Cardiac septum (tissue), 1 donor: ENCODE measurements at regions of chr10 and their contacts with region 1.

Region 1: DNA sequence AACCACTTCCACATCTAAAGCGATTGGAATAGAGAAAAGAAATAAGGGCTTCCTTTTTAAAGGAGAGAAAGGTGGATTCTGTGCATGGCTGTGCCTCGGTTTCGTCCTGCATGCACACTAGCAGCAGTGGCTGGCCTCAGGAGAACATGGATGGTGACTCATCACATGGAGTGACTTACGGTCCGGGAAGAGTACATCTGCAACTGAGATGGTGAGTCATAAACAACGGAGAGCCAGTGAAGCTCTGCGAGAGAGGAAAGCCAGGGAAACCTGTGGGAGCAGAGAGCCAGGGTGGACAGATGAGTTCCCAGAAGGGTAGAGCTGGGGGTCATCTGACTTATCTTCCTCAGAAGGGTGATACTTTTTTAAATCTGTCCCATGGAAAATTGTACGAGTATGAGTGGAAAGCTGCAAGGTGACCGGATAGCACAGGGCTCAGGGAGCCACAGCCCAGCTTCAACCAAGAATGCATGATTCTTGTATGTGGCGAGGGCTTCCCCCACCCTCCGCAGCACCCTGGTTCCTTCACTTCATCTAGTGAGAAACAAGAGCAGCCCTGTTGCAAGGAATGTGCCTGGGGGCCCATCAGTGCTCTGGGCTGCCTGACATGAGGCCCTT is 259.1 kb downstream of the KLF6 start:
- DNase-seq: no peak

Region 2: DNA sequence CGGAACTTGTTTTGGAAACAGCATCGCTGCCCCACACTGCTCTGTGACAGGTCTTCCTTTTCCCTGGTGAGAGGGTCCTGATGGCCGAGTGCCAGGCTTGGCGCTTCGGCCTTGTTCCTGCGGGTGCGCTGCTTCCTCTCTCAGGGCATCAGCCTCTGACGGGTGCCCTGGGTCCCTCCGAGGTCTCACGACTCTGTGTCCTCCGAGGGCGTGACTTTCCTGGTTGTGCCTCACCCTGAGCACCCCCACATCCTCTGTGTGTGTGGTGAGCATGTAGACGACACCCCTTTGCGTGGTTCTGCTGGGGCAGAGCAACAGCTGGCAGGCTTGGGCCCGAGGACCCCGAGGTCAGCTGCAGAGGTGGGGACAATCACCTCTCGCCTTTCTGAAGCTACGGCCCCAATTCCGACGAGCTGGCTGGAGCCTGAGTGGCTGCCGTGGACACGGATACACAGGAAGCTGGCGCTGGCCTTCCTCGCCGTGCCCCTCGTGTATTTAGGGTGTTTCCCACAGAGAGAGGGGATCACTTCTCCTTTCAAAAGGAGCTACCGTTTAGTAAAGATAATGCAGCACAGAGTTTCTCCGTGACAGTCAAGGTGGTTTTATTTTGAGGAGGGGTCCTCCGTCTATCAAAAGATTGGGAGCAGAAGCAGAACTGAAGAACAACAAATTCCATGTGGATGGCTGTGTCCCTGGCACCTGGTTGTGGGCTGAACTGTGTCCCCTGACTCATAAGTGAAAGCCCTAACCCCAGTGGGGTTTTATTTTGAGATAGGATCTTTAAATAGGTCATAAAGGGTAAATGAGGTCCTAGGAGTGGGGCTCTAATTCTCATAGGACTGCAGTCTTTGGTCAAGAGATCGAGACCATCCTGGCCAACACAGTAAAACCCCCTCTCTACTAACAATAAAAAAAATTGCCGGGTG is 317.2 kb before region 1 on chr10:
- intact Hi-C with region 1: no loop called
- DNase-seq: no peak

Region 3: DNA sequence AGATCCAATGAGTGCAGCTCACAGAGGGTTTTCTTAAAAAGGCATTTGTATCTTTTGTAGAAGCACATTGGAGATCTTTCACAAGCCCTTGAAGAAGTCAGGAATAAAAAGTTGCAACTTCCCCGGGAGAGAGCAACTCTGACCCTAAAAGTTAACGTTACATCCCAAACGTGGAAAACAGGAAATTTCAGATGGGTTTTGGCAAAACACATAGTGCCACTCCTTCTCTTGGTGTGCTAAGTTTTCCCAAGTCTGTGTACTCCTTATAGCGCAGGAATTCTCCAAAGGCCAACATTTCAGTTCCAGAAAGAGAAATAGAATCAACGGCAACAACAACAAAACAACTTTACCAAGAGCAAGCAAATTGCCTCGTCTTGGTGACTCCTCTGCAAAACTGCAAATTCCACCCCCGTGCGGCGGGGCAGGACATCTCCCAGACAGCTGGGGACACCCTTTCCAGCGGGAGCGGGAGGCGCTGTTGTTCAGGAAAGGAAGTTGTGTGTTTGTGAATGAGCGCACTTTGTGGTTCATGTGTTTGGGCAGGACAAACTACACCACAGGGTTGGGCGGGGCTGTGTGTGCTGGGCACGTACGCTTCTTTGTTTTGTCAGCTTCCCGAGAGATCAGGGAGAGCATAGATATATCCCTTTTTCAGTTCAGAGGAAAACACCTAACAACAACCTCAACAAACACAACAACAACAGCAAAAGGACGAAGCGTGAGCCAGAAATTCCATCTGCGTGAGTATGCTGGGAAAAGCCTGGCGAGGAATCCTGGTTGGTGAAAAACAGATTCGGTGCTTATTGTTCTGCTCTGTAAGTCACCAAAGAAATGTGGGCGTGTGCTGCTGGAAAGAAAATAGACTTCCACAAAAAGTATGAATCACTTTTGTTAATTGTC is 58.6 kb before region 1 on chr10:
- intact Hi-C with region 1: loop called (anchors 5 kb)
- DNase-seq: peak; percentile 89

Region 4: GRCh38 chr10:3776796-3777571 is 251.0 kb after region 1 on chr10:
- intact Hi-C with region 1: loop called (anchors 5 kb)
- DNase-seq: no peak